CD4-positive, alpha-beta memory T cell (primary cell): ENCODE measurements at regions of chr10 and their contacts with region 1.

Region 1: GRCh38 chr10:104353325-104354048 is at the start of gene CFAP58:
- DNase-seq: peak; percentile 87 to 91 (median 88)
- H3K4me3 ChIP-seq: peak within 1 kb of the TSS; percentile 17 to 58
- H3K4me3 Mint-ChIP-seq: peak within 1 kb of the TSS in 3 of 8 donors; percentile 41 to 72 (median 61)
- H3K27ac ChIP-seq: peak within 1 kb of the TSS; percentile 18
- H3K27ac Mint-ChIP-seq: peak within 1 kb of the TSS in 4 of 7 donors; percentile 34 to 66 (median 46)
- H3K4me1 ChIP-seq: peaks cover 33% of the 10 kb centered on the region
- H3K4me1 Mint-ChIP-seq: peaks cover 0 to 19% (median 14%) of the 10 kb centered on the region in 4 donors
- H3K27me3 ChIP-seq: no peaks in the 10 kb centered on the region
- H3K27me3 Mint-ChIP-seq: no peaks in the 10 kb centered on the region
- total RNA-seq, gene CFAP58: not detected

Region 2: DNA sequence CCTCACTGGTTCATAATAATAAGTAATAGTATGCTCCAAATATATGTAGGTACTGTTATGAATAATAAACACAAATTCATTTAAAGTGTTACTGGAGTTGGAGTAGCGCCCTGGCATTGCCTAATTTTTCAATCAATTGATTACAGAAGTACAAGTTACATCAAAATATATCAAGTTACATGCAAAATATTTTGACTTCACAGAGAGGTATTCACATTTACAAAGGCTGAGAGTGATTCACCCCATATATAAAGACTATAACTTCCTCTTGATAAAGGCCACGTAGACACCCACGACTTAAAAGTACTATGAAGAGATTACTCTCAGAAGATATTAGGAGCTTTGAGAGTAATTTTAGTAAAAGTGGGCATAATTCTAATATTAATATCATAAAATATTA is 254.2 kb before region 1 on chr10:
- CTCF ChIA-PET with region 1: no interaction called
- POLR2A ChIA-PET with region 1: no interaction called
- intact Hi-C with region 1: no loop called
- DNase-seq: no peak
- H3K4me3 ChIP-seq: no peak overlapping the region
- H3K4me3 Mint-ChIP-seq: no peak overlapping the region
- H3K27ac ChIP-seq: no peak overlapping the region
- H3K27ac Mint-ChIP-seq: no peak overlapping the region
- H3K4me1 ChIP-seq: no peaks in the 10 kb centered on the region
- H3K4me1 Mint-ChIP-seq: no peaks in the 10 kb centered on the region
- H3K27me3 ChIP-seq: no peaks in the 10 kb centered on the region
- H3K27me3 Mint-ChIP-seq: peaks cover 5 to 10% of the 10 kb centered on the region in 2 donors

Region 3: DNA sequence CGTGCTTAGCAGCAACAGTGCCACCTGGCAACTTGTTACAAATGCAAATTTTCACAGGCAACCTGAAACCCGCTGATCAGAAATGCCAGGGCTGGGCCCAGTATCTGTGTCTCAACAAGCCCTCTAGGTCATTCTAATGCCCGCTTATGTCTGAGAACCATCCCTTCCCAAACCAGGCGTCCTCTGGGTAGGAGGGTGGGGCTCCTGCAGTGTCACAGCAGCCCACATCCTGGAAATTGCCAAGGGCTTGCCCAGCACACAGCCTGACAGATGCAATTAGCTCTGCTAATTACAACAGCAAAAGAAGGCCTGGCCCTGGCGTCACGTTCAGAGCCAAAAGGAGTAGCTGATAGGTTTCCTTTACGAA is 31.1 kb before region 1 on chr10:
- CTCF ChIA-PET with region 1: interaction called, 38 read pairs
- POLR2A ChIA-PET with region 1: interaction called, 7 read pairs
- intact Hi-C with region 1: loop called (anchors 1 kb)
- DNase-seq: peak in 2 of 5 donors; percentile 38 to 61
- H3K4me3 ChIP-seq: peak overlapping the region; percentile 31 to 42
- H3K4me3 Mint-ChIP-seq: peak overlapping the region; percentile 72 to 86 (median 81)
- H3K27ac ChIP-seq: peak overlapping the region; percentile 31
- H3K27ac Mint-ChIP-seq: peak overlapping the region; percentile 94 to 98 (median 95)
- H3K4me1 ChIP-seq: peaks cover 84% of the 10 kb centered on the region
- H3K4me1 Mint-ChIP-seq: peaks cover 63 to 100% (median 87%) of the 10 kb centered on the region in 4 donors
- H3K27me3 ChIP-seq: no peaks in the 10 kb centered on the region
- H3K27me3 Mint-ChIP-seq: no peaks in the 10 kb centered on the region

Region 4: DNA sequence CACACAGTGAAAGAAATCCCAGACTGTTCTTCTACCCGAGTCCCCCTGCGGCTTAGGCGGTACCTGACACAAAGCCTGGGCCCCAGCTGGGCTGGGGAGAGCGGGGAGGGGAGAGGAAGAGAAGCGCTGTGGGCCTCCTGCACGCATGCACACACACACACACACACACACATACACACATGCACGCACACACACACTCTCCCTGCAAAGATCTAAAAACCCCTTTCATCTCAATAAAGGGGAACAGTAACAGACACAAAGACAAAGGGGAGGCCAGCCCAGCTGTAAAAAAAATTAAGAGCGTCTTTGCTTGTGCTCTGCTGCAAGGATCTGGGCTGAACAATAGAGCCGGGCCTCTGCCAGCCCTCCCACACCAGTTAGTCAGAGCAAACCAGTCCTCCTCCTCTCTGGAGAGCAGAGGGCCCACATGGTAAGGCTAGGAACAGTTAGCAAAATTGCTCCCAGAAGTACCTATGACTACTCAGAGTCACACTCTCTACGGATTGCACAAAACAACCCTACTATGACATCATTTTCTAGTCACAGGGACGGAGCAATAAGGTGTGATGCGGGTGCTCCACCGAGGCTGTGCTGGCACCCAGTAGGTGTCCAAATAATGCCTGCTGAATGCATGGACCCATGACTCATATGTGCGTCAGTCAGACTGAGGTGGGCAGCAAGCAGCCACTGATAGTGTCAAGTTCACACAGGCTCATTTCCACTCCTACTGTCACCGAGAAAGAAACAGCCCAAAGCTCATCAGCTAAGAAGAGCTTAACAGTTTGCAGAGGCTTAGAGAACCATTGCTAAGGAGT is 24.4 kb before region 1 on chr10:
- CTCF ChIA-PET with region 1: interaction called, 38 read pairs
- POLR2A ChIA-PET with region 1: interaction called, 4 read pairs
- intact Hi-C with region 1: loop called (anchors 2 kb)
- DNase-seq: peak; percentile 73 to 96 (median 77)
- H3K4me3 ChIP-seq: peak overlapping the region; percentile 26 to 32
- H3K4me3 Mint-ChIP-seq: peak overlapping the region; percentile 75 to 90 (median 82)
- H3K27ac ChIP-seq: peak overlapping the region; percentile 64
- H3K27ac Mint-ChIP-seq: peak overlapping the region; percentile 89 to 98 (median 96)
- H3K4me1 ChIP-seq: peaks cover 100% of the 10 kb centered on the region
- H3K4me1 Mint-ChIP-seq: peaks cover 68 to 100% (median 93%) of the 10 kb centered on the region in 4 donors
- H3K27me3 ChIP-seq: no peaks in the 10 kb centered on the region
- H3K27me3 Mint-ChIP-seq: no peaks in the 10 kb centered on the region